Esophagus muscularis mucosa (tissue), 4 donors: ENCODE measurements at regions of chr7 and their contacts with region 1.

Region 1: DNA sequence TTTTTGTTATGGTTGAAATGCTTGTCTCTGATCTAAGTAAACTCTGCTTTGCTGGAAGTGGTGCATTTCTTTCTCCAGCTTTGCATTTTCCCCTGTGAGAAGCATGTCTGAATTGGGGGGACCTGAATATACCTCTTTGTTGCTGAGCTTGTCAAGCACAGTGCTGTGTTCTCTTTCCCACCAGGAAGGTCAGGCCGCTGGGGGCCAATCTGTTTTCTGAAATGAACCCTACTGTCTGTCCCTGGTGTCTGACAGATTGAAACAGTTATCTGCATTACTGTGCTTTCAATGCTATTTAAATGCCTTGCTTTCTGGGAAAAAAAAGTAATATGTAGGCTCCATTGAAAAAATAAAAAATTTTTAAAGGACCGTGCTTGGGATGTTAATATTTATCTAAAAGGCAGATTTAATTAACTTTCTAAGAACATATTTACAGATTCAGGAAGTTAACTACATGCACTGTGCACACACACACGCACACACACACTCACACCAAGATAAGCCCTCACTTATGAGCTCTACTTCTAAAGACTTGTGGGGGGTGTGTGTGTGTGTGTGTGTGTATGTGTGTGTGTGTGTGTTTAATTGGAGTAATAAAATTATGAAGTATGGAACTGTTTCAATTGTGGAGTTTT is 127.0 kb upstream of the FZD1 start:
- DNase-seq: no peak
- H3K4me3 ChIP-seq: no peak overlapping the region
- H3K27ac ChIP-seq: no peak overlapping the region
- H3K4me1 ChIP-seq: no peaks in the 10 kb centered on the region
- H3K27me3 ChIP-seq: no peaks in the 10 kb centered on the region
- CTCF ChIP-seq: no peak
- EP300 ChIP-seq: no peak
- POLR2A ChIP-seq: no peak

Region 2: GRCh38 chr7:91193141-91193540 is 55.9 kb after region 1 on chr7:
- intact Hi-C with region 1: no loop called
- DNase-seq: no peak
- H3K4me3 ChIP-seq: no peak overlapping the region
- H3K27ac ChIP-seq: no peak overlapping the region
- H3K4me1 ChIP-seq: no peaks in the 10 kb centered on the region
- H3K27me3 ChIP-seq: no peaks in the 10 kb centered on the region
- CTCF ChIP-seq: no peak
- EP300 ChIP-seq: no peak
- POLR2A ChIP-seq: no peak

Region 3: DNA sequence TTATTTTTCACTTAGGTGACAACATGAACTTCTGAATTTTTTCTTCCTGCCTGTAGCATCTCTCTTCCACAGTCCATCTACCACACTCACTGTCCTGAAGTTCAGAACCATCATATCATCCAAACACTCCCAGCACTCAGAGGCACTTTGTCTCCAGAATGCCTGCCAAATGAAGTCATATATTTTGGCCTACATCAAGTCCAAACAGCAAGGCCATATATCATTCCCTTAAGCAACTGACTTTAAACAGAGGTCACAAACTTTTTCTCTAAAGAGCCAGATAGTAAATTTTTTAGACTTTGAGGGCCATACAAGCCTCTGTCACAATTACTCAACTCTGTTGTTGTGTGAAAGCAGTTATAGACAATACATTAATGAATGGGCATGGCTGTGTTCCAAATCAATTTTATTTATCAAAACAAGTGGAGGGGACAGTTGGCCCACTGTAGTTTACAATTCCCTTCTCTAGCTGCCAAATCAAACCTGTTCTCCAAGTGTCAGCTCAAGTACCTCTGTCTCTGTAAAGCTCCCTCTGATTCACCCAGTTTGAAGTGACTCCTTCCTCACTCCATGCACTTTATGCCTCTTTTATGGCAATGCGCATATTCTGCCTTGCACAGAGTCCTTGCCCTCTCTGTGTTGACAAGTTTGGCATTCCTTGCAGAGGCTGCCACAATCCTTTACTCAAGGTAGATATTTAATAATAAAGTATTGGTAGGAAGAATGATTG is 432.6 kb after region 1 on chr7:
- intact Hi-C with region 1: loop called (anchors 10 kb)
- DNase-seq: no peak
- H3K4me3 ChIP-seq: no peak overlapping the region
- H3K27ac ChIP-seq: peak overlapping the region in 2 of 4 donors; percentile 21 to 54
- H3K4me1 ChIP-seq: peaks cover 0 to 50% (median 46%) of the 10 kb centered on the region in 4 donors
- H3K27me3 ChIP-seq: no peaks in the 10 kb centered on the region
- CTCF ChIP-seq: no peak
- EP300 ChIP-seq: no peak
- POLR2A ChIP-seq: no peak